ENCODE measurements at regions of chr16 and their contacts with region 1.

Region 1: GRCh38 chr16:9908613-9909012 is 273.6 kb downstream of the GRIN2A start:
- DNase-seq: peak; percentile 80
- ATAC-seq: peak; percentile 95 to 96

Region 2: DNA sequence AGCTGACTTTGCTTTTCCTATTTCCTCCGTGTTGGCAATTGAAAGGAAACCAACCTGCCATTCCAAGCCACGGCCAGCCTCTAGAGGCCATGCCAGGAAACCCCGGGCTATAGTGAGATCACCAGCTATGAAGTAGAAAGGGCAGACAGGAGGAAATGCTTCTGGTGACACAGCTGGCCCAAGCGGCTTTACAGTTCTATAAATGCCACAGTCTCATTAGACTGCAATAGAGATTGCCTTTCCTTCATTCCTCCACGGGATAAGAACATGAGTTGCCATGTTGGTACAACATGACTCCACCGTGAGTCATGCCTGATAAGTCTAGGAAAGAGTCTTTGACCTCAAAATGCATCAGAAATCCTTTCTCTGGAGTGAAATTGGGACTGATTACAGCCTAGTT is 111.3 kb before region 1 on chr16:
- intact Hi-C with region 1: loop called in 1 of 2 experiments (anchors 10 kb)
- DNase-seq: peak; percentile 54
- ATAC-seq: peak; percentile 77 to 91